PC-3 (cell line): ENCODE measurements at regions of chr15 and their contacts with region 1.

Region 1: GRCh38 chr15:65856821-65857455 is 12.4 kb upstream of the RAB11A start:
- DNase-seq: peak; percentile 71
- ATAC-seq: peak; percentile 35; the same call in 1 of the 2 replicates
- H3K4me3 ChIP-seq: no peak overlapping the region
- H3K27ac ChIP-seq: no peak overlapping the region
- H3K4me1 ChIP-seq: peaks cover 9% of the 10 kb centered on the region; the same call in 1 of the 2 replicates
- H3K27me3 ChIP-seq: no peaks in the 10 kb centered on the region
- CTCF ChIP-seq: peak; percentile 81

Region 2: GRCh38 chr15:65722191-65722590 is 134.7 kb before region 1 on chr15:
- CTCF ChIA-PET with region 1: no interaction called
- POLR2A ChIA-PET with region 1: no interaction called
- intact Hi-C with region 1: no loop called
- DNase-seq: no peak
- ATAC-seq: no peak
- H3K4me3 ChIP-seq: no peak overlapping the region
- H3K27ac ChIP-seq: no peak overlapping the region
- H3K4me1 ChIP-seq: no peaks in the 10 kb centered on the region
- H3K27me3 ChIP-seq: no peaks in the 10 kb centered on the region
- CTCF ChIP-seq: no peak

Region 3: DNA sequence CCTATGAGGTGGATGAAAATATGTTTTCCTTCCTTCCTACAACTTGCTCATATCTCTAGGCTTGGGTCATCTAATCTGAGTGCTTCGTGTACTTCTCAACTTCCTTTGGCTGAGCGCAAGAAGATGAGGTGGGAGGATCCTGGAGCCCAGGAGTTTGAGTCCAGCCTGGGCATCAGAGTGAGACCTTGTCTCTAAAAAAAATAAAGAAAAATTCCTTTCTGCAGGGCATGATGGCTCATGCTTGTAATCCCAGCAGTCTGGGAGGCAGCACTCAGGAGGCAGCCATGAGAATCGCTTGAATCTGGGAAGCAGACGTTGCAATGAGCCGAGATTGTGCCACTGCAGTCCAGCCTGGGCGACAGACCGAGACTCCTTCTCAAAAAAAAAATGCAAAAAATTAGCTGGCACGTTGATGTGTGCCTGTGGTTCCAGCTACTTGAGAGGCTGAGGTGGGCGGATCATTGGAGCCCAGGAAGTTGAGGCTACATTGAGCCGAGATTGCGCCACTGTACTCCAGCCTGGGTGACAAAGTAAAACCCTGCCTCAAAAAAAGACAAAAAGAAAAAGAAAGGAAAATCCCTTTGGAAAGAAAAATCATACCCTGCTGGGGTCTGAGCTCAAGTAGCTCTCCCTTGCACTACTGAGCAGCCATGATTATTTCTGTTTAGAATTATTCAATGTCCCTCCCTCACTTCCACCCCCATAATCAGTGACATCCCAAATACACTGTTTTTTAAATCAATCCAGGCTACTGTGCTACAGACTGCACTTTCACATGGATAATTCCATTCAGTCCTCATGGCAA is 15.6 kb before region 1 on chr15:
- CTCF ChIA-PET with region 1: no interaction called
- POLR2A ChIA-PET with region 1: no interaction called
- intact Hi-C with region 1: no loop called
- DNase-seq: no peak
- ATAC-seq: no peak
- H3K4me3 ChIP-seq: no peak overlapping the region
- H3K27ac ChIP-seq: no peak overlapping the region
- H3K4me1 ChIP-seq: no peaks in the 10 kb centered on the region
- H3K27me3 ChIP-seq: no peaks in the 10 kb centered on the region
- CTCF ChIP-seq: no peak

Region 4: DNA sequence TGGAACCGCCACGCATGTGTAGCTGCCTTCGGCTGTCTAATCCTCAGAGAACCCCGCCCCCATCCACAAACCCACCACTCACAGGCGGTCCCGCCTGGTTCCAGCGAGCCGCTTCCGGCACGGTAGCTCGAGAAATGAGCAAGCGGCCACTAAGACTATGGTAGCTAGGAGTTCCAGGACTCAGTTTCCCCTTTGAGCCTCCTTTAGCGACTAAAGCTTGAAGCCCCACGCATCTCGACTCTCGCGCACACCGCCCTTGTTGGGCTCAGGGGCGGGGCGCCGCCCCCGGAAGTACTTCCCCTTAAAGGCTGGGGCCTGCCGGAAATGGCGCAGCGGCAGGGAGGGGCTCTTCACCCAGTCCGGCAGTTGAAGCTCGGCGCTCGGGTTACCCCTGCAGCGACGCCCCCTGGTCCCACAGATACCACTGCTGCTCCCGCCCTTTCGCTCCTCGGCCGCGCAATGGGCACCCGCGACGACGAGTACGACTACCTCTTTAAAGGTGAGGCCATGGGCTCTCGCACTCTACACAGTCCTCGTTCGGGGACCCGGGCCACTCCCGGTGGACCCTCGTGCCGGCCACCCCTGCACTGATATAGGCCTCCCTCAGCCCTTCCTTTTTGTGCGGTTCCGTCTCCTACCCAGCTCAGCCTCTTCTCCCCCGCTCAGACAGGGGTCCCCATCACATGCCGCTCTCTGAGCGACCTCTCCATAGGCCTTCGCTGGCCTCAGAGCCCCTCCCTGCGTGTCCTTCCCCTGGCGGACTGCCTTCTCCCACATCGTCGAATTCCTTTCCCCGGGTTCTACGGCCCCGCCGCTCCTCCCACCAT is 12.4 kb after region 1 on chr15 and contains the start of gene RAB11A:
- CTCF ChIA-PET with region 1: interaction called, 19 read pairs
- POLR2A ChIA-PET with region 1: no interaction called
- intact Hi-C with region 1: no loop called
- DNase-seq: peak; percentile 90
- ATAC-seq: peak; percentile 90
- H3K4me3 ChIP-seq: peak within 1 kb of the TSS; percentile 89
- H3K27ac ChIP-seq: peak within 1 kb of the TSS; percentile 60
- H3K4me1 ChIP-seq: peaks cover 16% of the 10 kb centered on the region
- H3K27me3 ChIP-seq: no peaks in the 10 kb centered on the region
- CTCF ChIP-seq: no peak; the same call in 1 of the 2 replicates
- total RNA-seq, gene RAB11A: 123 and 171 TPM in 2 replicates